Dorsolateral prefrontal cortex (tissue), 120 donors: ENCODE measurements at regions of chr20 and their contacts with region 1.

Region 1: DNA sequence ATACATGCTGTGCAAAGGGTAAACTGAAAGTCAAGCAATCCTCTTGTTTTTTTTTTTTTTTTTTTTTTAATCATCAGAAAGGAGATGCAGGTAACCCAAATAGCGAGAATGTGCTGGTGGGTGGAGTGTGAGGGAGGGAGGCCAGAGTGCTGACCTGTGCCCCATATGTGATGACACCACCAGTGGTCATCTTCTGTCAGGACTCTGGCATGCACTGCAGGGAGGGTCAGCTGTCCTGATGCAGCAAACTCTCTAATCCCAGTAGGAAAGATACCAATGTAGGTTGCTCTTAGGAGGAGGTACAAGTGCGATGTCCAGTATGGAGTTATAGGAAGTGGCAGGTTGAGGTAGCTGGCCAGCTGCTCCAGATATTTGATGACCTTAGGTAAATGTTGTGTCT is 2.8 kb upstream of the CST4 start:
- DNase-seq: no peak
- H3K4me3 ChIP-seq: no peak overlapping the region
- H3K27ac ChIP-seq: no peak overlapping the region
- H3K27me3 ChIP-seq: peaks cover 0 to 15% (median 0%) of the 10 kb centered on the region in 45 donors
- CTCF ChIP-seq: no peak

Region 2: DNA sequence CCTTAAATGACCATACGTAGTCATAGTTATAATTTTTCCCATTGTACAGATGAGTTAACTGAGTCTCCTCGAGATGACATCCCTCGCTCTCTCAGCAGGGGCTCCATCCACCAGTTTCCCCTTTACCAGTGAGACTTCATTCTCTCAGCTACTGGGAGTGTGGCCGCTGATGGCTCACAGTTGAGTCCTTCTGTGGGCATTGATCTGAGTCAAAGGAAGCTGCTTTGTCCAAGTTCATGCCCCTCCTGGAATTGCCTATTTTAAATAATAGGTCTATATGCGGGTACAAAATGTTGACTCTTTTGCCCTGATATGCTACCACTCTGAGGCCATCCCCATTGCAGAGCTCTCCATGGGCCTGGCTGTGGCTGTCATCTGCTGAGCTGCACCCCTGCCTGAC is 73.9 kb after region 1 on chr20:
- intact Hi-C with region 1: loop called in 1 of 2 experiments (anchors 10 kb)
- DNase-seq: no peak
- H3K4me3 ChIP-seq: no peak overlapping the region
- H3K27ac ChIP-seq: no peak overlapping the region
- H3K27me3 ChIP-seq: peaks cover 0 to 8% (median 0%) of the 10 kb centered on the region in 45 donors
- CTCF ChIP-seq: no peak

Region 3: GRCh38 chr20:24535941-24536730 is 844.5 kb after region 1 on chr20:
- intact Hi-C with region 1: no loop called
- DNase-seq: peak in 1 of 10 donors; percentile 69
- H3K4me3 ChIP-seq: no peak overlapping the region
- H3K27ac ChIP-seq: peak overlapping the region in 13 of 59 donors; percentile 3 to 55 (median 20)
- H3K27me3 ChIP-seq: no peaks in the 10 kb centered on the region
- CTCF ChIP-seq: no peak